ENCODE measurements at regions of chr9 and their contacts with region 1.

Region 1: GRCh38 chr9:105157130-105157583 is 87.3 kb upstream of the SLC44A1 start:
- DNase-seq: peak; percentile 44
- ATAC-seq: peak; percentile 64
- H3K4me3 Mint-ChIP-seq: no peak overlapping the region
- H3K27ac Mint-ChIP-seq: no peak overlapping the region
- H3K4me1 Mint-ChIP-seq: peaks cover 2% of the 10 kb centered on the region
- H3K27me3 Mint-ChIP-seq: peaks cover 7% of the 10 kb centered on the region

Region 2: GRCh38 chr9:104863180-104863883 is 293.8 kb before region 1 on chr9:
- CTCF ChIA-PET with region 1: interaction called, 11 read pairs
- DNase-seq: peak; percentile 61
- ATAC-seq: peak; percentile 83
- H3K4me3 Mint-ChIP-seq: no peak overlapping the region
- H3K27ac Mint-ChIP-seq: no peak overlapping the region
- H3K4me1 Mint-ChIP-seq: peaks cover 1% of the 10 kb centered on the region
- H3K27me3 Mint-ChIP-seq: no peaks in the 10 kb centered on the region

Region 3: GRCh38 chr9:105073147-105073546 is 84.0 kb before region 1 on chr9:
- CTCF ChIA-PET with region 1: no interaction called
- DNase-seq: no peak
- ATAC-seq: no peak
- H3K4me3 Mint-ChIP-seq: no peak overlapping the region
- H3K27ac Mint-ChIP-seq: no peak overlapping the region
- H3K4me1 Mint-ChIP-seq: no peaks in the 10 kb centered on the region
- H3K27me3 Mint-ChIP-seq: no peaks in the 10 kb centered on the region

Region 4: GRCh38 chr9:105191508-105192121 is 34.5 kb after region 1 on chr9:
- CTCF ChIA-PET with region 1: no interaction called
- DNase-seq: no peak
- ATAC-seq: peak; percentile 39
- H3K4me3 Mint-ChIP-seq: no peak overlapping the region
- H3K27ac Mint-ChIP-seq: no peak overlapping the region
- H3K4me1 Mint-ChIP-seq: peaks cover 14% of the 10 kb centered on the region
- H3K27me3 Mint-ChIP-seq: peaks cover 26% of the 10 kb centered on the region

Measured in activated CD8-positive, alpha-beta memory T cell treated with anti-CD3 and anti-CD28 coated beads, Interleukin-2, amount 10 ng/mL, durations not matched to agents 7 days and 5 days (primary cell).